Activated CD4-positive, alpha-beta memory T cell treated with anti-CD3 and anti-CD28 coated beads for 36 hours (primary cell): ENCODE measurements at regions of chr12 and their contacts with region 1.

Region 1: GRCh38 chr12:89040146-89040964 is 311.9 kb downstream of the DUSP6 start:
- DNase-seq: peak; percentile 93
- H3K4me3 Mint-ChIP-seq: peak overlapping the region; percentile 18
- H3K27ac Mint-ChIP-seq: peak overlapping the region; percentile 98
- H3K4me1 Mint-ChIP-seq: peaks cover 57% of the 10 kb centered on the region
- H3K27me3 Mint-ChIP-seq: peaks cover 1% of the 10 kb centered on the region

Region 2: DNA sequence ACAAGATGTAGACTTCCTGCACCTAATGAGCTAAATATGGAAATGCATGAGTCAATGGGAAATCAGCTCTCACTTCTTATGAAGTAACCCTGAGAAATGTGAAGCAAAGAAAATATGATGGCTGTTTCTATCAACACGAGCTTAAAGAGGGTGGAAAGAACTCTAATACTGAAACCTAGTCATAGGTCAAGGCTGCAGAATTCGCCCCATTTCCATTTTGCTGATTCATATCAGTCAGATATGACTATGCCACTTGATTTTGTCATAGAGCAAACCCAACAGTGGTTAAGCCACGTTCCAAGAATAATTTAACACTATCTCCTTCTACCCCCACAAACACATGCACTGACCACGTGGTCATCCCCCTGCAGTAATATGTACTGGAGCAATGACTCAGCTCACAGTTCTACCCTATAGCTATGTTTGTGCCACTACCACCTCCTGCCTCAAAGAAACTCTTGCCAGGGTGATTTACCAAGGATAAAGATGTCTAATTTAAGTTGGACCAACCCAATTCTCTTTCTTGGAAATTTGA is 740.7 kb before region 1 on chr12:
- CTCF ChIA-PET with region 1: no interaction called
- POLR2A ChIA-PET with region 1: no interaction called
- intact Hi-C with region 1: loop called (anchors 1 kb)
- DNase-seq: peak; percentile 75
- H3K4me3 Mint-ChIP-seq: no peak overlapping the region
- H3K27ac Mint-ChIP-seq: peak overlapping the region; percentile 72
- H3K4me1 Mint-ChIP-seq: peaks cover 27% of the 10 kb centered on the region
- H3K27me3 Mint-ChIP-seq: no peaks in the 10 kb centered on the region

Region 3: GRCh38 chr12:89073027-89073398 is 32.7 kb after region 1 on chr12:
- CTCF ChIA-PET with region 1: interaction called, 4 read pairs
- POLR2A ChIA-PET with region 1: interaction called, 14 read pairs
- intact Hi-C with region 1: loop called (anchors 1 kb)
- DNase-seq: peak; percentile 48
- H3K4me3 Mint-ChIP-seq: no peak overlapping the region
- H3K27ac Mint-ChIP-seq: peak overlapping the region; percentile 86
- H3K4me1 Mint-ChIP-seq: peaks cover 41% of the 10 kb centered on the region
- H3K27me3 Mint-ChIP-seq: no peaks in the 10 kb centered on the region

Region 4: DNA sequence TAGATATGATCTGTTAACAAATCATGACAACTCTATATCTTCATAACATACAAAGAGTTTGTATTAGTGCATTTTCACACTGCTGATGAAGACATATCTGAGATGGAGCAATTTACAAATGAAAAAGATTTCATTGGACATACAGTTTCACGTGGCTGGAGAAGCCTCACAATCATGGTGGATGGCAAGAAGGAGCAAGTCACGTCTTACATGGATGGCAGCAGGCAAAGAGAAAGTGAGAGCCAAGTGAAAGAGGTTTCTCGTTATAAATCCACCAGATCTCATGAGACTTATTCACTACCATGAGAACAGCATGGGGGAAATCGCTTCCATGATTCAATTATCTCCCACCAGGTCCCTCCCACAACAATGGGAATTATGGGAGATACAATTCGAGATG is 154.3 kb after region 1 on chr12:
- CTCF ChIA-PET with region 1: no interaction called
- POLR2A ChIA-PET with region 1: no interaction called
- intact Hi-C with region 1: loop called (anchors 1 kb)
- DNase-seq: no peak
- H3K4me3 Mint-ChIP-seq: no peak overlapping the region
- H3K27ac Mint-ChIP-seq: no peak overlapping the region
- H3K4me1 Mint-ChIP-seq: peaks cover 3% of the 10 kb centered on the region
- H3K27me3 Mint-ChIP-seq: no peaks in the 10 kb centered on the region

Region 5: GRCh38 chr12:89345830-89346740 is 305.7 kb after region 1 on chr12:
- CTCF ChIA-PET with region 1: interaction called, 15 read pairs
- POLR2A ChIA-PET with region 1: interaction called, 51 read pairs
- intact Hi-C with region 1: no loop called
- DNase-seq: peak; percentile 65
- H3K4me3 Mint-ChIP-seq: peak overlapping the region; percentile 57
- H3K27ac Mint-ChIP-seq: peak overlapping the region; percentile 76
- H3K4me1 Mint-ChIP-seq: peaks cover 56% of the 10 kb centered on the region
- H3K27me3 Mint-ChIP-seq: peaks cover 2% of the 10 kb centered on the region

Region 6: GRCh38 chr12:89524541-89525285 is 484.4 kb after region 1 on chr12 and contains the start of gene GALNT4:
- CTCF ChIA-PET with region 1: interaction called, 4 read pairs
- POLR2A ChIA-PET with region 1: interaction called, 4 read pairs
- intact Hi-C with region 1: loop called (anchors 1 kb)
- DNase-seq: peak; percentile 86
- H3K4me3 Mint-ChIP-seq: peak within 1 kb of the TSS; percentile 99
- H3K27ac Mint-ChIP-seq: peak within 1 kb of the TSS; percentile 98
- H3K4me1 Mint-ChIP-seq: peaks cover 45% of the 10 kb centered on the region
- H3K27me3 Mint-ChIP-seq: no peaks in the 10 kb centered on the region
- total RNA-seq, gene GALNT4: 5.8 to 6.0 TPM